AG04450 (cell line): ENCODE measurements at regions of chr20 and their contacts with region 1.

Region 1: GRCh38 chr20:59515014-59515905 is 89.1 kb upstream of the PHACTR3 start:
- DNase-seq: no peak
- H3K4me3 ChIP-seq: no peak overlapping the region
- H3K27ac ChIP-seq: no peak overlapping the region
- H3K27me3 ChIP-seq: no peaks in the 10 kb centered on the region
- CTCF ChIP-seq: peak; percentile 82

Region 2: DNA sequence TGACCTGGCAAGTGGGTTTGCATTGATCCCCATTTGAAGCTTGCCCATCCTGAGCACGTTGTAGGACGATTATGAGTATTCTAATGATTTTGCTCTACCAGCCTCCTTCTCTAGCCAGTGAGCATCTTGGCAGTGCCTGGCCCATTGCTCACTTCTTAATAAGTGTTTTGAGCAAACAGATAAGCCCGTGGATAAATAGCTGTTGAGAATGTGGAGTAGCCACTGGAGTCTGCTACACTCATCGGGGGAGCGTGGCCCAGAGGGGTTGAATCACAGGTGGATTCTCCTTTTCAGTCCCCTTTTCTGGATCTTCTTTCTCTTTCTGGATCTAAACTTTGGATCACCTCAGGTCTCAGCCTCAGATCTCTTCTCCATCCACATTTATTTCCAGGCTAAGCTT is 230.8 kb before region 1 on chr20:
- CTCF ChIA-PET with region 1: no interaction called
- POLR2A ChIA-PET with region 1: no interaction called
- DNase-seq: no peak
- H3K4me3 ChIP-seq: no peak overlapping the region
- H3K27ac ChIP-seq: no peak overlapping the region
- H3K27me3 ChIP-seq: no peaks in the 10 kb centered on the region
- CTCF ChIP-seq: no peak

Region 3: DNA sequence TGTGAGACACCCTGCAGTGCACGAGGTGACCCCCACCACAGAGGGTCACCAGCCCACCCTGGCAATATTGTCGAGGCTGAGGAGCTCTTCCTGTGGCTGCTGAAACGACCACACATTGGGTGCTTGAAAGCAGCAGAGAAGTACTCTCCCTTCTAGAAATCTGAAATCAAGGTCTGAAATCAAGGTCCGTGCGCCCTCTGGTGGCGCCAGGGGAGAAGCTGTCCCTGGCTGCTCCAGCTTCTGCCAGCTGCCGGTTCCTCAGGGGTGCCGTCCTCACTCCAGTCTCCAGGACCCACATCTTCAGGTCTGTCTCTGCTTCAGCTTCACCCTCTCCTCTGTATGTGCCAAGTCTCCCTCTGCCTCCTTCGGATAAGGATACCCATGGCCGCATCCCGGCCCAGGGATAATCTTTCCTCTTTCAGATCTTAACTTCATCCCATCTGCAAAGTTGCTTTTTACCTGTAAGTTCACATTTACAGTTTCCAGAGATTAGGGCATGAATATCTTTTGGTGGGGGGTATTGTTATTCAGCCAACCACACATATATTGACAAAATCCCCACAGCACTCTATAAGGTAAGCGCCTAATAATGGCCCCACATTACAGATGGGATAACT is 19.3 kb before region 1 on chr20:
- CTCF ChIA-PET with region 1: interaction called, 23 read pairs
- POLR2A ChIA-PET with region 1: no interaction called
- DNase-seq: peak; percentile 18
- H3K4me3 ChIP-seq: no peak overlapping the region
- H3K27ac ChIP-seq: no peak overlapping the region
- H3K27me3 ChIP-seq: no peaks in the 10 kb centered on the region
- CTCF ChIP-seq: peak; percentile 89

Region 4: GRCh38 chr20:59525500-59526241 is 10.4 kb after region 1 on chr20:
- CTCF ChIA-PET with region 1: interaction called, 35 read pairs
- POLR2A ChIA-PET with region 1: no interaction called
- DNase-seq: no peak
- H3K4me3 ChIP-seq: no peak overlapping the region
- H3K27ac ChIP-seq: no peak overlapping the region
- H3K27me3 ChIP-seq: no peaks in the 10 kb centered on the region
- CTCF ChIP-seq: peak; percentile 80

Region 5: GRCh38 chr20:59547596-59547995 is 32.3 kb after region 1 on chr20:
- CTCF ChIA-PET with region 1: no interaction called
- POLR2A ChIA-PET with region 1: no interaction called
- DNase-seq: no peak
- H3K4me3 ChIP-seq: no peak overlapping the region
- H3K27ac ChIP-seq: no peak overlapping the region
- H3K27me3 ChIP-seq: no peaks in the 10 kb centered on the region
- CTCF ChIP-seq: no peak